KBM-7 (cell line): ENCODE measurements at regions of chr11 and their contacts with region 1.

Region 1: DNA sequence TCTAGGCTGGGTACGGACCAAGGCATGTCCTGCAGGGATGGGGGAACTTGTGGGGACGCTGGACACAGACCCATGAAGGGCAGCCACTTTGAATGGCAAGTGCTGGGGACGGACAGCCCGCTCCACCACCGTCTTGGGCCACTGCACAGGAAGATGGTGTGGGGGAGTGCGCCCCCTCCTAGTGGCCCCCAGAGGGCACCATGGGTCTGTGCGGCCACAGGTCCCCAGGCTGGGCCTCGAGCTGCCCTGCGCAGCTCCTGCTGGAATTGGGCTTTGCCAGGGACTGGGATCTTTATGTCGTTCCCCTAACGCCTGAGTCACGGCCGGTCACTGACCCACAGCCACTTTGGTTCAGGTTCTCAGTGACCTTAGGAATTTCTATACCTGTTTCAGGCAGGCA is 44.4 kb downstream of the NAT10 start:
- DNase-seq: no peak

Region 2: DNA sequence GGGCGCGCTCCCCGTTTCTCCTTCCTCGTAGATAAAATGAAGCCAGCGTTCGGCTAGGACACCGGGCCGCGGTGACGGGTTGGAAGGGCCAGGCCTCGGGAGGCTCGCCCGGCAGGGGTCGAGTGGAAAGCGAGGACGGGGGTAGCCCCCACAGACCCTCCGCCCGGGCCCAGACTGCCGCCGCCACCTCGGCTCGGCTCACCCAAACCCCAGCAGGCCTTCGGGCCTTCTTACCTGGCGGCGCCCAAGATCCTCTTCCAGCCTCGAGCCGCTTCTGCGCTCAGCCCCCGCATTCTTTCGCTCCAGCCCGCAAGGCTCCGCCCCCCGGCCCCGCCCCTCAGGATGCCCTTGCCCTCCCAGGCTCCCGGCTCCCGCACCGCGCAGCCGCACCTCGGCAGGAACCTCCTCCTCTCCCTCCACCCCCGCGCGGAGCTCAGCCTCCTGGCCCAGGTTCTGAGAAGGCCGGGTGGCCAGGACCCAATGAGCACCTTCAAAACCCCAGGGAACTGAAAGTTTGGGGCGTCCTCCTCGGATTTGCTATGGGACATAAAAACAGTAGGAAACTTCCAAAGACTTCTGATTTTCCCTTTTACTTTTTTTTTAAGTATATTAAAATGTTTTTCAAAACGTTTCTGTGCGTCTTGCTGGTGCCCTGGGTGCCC is 413.5 kb before region 1 on chr11 and contains the start of gene CD59:
- in situ Hi-C with region 1: no loop called
- DNase-seq: peak; percentile 86

Region 3: GRCh38 chr11:33893711-33894397 is 255.9 kb before region 1 on chr11:
- in situ Hi-C with region 1: no loop called
- DNase-seq: peak; percentile 98

Region 4: DNA sequence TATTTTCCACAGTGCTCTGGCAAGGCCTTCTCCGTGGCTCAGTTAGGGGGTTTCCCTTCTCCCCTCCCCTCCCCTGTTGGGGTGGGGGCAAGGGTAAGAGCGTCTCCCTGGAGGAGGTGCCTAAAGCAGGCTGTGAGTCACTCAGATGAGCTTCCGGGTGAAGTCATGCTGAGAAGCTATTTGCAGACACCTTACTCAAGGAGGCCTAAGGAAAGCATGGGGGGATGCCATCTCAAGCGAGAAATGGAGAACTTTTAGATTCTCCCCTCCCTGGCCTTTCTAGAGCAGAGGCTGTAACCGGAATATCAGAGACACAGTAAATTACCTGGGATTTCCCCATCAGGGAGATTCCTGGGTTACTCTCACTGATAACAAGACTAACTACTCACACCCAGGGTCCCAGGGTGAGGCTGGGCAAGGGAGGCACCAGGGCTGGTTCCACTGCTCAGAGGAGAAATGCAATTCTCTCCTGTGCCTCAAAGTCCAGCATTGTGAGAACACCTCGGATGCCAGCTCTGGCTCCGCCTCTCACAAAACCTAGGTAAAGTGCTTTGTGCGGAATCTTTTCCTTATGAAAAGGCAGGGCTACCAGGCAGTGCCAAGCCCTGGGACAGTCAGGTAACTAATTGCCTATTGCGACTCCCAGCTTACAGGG is 84.4 kb after region 1 on chr11:
- in situ Hi-C with region 1: loop called (anchors 25 kb)
- DNase-seq: peak; percentile 67

Region 5: GRCh38 chr11:34480314-34480713 is 330.5 kb after region 1 on chr11:
- in situ Hi-C with region 1: loop called (anchors 10 kb)
- DNase-seq: no peak

Region 6: GRCh38 chr11:35347921-35348331 is 1198.1 kb after region 1 on chr11:
- in situ Hi-C with region 1: no loop called
- DNase-seq: no peak